GM18951 (cell line): ENCODE measurements at regions of chr16 and their contacts with region 1.

Region 1: DNA sequence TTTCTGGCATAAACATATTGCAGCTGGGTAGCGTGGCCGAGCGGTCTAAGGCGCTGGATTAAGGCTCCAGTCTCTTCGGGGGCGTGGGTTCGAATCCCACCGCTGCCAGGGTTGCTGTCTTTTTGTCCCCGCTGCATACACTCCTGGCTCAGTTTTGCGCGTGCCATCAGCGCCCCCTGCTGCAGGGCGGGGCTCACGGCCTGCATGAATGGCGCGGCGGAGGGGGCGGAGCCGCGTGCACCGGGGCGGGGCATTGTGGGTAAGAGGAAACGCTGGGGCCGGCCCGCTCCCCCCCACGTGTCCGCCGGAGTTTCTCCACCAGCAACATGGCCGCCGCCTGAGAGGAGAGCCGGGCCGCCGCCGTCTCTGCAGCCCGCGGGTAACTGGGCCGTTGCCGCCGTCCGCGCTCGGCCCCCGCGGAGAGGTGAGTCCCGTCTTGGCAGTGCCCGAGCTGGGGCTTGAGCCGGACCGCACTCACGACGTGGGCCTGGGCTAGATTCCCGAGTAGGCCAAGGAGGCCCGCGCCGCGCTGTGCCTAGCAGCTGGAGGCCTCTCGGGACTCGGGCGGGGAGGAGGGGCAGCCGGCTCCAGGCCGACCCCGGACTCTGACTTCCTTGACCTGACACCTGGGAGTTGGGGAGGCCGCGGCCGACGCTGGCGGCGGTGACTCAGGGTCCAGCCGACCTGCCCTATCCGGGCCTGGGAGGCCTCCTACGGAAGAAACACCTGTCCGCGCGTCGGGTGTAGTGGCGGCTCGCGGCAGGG is at the start of gene POLR3E:
- POLR2A ChIP-seq: peak; percentile 75

Region 2: DNA sequence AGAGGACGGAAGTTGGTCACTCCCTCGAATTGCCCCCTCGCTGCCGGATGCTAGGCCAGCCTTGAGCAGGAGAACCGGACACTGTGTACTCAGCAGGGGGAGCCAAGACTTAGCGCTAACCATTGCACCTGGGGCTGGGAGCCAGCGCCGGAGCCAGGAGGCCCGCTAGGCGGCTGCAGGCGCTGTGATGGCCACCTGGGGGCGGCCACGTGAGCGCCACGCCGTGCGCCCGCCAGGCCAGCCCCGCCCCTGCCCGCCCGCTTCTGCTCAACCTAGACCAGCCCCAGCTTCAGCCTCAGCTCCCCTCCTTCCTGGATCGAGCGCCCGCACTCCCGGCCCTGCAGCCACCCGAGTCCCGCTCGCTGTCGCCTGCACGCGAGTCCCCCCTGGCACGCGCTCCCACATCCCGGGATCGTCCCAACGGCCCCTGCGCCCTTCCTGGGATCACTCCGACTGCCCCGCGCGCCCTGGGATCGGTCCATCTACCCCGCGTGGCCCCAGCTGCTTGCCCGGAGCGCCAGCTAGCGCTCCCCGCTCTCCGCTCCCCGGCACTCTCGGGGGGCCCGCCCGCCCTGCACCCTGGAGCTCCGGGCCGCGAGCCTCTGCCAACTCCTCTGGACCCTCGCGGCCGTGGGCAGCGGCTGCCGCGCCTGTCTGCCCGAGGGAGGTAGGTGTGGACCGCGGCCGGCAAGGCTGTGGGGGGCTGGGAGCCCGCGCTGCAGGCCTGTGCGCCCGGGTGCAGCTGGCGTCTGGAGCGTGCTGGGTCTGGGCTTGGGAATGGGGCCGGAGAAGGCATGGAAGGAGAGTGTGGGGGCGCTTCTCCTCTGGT is 91.1 kb before region 1 on chr16 and contains the start of gene EEF2K:
- in situ Hi-C with region 1: loop called (anchors 5 kb)
- POLR2A ChIP-seq: peak; percentile 78

Region 3: DNA sequence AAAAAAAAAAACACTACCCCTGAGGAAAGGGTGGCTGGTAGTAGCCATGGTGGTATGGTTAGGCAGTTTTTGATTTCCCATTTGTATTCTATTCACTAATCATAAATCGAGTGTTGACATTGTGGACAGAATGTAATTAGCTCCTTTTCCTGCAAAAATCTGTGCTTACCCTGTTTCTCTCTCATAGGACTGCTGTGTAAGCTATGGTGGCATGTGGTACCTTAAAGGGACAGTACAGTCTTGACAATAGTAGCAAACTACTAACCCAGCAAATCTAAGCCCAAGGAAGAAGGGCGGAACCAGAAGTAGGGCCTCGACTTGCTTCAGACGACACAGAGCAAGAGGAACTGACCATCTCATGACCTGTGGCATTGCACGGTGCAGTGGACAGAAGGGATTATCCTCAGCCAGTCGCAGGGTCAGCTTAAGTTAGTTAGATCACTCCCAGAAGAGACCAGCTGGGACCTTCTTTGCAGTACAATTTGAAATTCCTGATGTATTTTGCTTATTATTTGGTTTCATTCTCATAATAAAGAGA is 36.2 kb after region 1 on chr16:
- in situ Hi-C with region 1: no loop called
- POLR2A ChIP-seq: no peak